Panc1 (cell line): ENCODE measurements at regions of chr10 and their contacts with region 1.

Region 1: DNA sequence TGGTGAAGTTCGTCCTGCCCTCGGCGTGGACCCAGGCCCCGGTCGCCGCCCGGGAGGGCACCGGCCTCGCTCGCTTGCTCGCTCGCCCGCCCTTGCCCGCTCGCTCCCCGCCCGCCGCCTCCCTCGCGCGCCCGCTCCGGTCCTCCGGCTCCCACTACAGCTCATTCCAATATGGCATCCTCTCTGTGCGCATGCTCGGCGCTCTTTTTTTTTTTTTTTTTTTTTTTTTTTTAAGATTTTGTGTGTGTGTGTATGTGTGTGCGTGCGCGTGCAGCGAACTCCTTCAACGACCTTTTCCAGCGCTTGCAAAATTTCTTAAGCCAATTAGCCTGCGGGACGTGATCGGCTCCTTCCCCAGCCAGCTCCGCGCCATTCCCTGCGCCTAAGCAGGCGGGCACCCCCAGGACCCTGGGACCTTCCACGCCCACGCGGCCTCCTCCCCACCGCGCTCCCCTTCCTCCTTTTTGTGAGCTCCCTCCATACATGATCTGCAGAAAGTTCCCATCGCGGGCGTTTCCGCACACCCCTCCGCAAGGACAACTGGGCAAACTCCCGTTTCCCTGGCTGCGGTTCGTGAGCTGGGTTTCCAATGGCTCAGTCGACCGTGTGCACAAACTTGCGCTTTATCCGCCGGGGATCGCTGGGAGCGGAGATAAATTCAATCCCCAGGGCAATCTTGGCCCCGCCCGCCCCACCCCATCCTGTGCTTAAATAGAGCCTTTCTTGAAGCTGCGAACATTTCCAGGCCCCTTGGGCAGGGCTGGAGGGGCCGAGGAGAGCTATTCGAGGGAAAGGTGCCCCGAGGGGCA is at the start of gene SFMBT2:
- DNase-seq: no peak
- ATAC-seq: peak; percentile 70
- H3K4me3 ChIP-seq: peak within 1 kb of the TSS; percentile 49 to 56
- H3K27ac ChIP-seq: peak within 1 kb of the TSS; percentile 23; the same call in 1 of the 2 replicates
- H3K4me1 ChIP-seq: no peaks in the 10 kb centered on the region
- H3K27me3 ChIP-seq: no peaks in the 10 kb centered on the region; the same call in 1 of the 2 replicates
- CTCF ChIP-seq: no peak
- total RNA-seq, gene SFMBT2: 1.3 TPM

Region 2: DNA sequence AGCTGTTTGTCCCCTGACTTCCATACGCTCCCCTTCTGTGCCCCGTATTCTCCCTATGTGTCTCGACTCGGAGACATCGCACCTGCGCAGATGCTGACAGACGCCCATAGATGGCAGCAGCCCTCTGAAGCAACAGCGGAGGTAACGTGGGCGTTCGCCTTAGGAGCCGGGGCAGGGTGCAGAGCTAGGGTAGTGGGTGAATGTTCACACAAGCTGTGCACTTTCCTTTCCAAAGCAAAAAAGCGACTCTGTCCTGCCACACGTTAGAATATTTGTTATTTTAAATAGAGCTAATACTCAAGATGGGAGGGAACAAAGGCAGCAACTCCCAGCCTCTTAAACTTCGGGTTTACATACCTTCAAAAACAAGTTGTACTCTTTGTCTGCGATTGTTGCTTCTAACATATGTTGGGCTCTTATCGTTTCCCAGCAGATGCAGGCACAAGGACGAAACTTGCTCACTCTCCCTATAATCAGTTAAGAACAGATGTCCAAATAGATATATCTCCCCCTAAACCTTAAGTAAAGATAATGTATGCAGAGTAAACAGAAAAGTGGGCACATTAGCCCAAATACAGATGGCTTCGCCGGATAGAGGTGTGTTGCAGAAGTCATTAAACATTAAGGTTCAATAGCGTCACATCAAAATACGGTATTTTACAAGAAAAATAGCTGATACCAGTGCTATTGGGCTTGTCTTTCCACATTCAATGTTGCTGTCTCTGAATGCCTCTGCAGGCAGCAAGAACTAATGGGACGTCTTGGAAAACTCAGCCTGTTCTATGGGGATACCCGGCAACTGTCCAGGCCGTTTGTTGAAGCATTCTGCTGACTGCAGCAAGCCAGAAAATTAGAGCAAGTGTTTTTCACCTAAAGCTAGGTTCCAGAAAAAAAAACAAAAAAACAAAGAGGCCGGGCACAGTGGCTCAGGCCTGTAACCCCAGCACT is 490.7 kb before region 1 on chr10:
- CTCF ChIA-PET with region 1: interaction called, 10 read pairs
- POLR2A ChIA-PET with region 1: no interaction called
- in situ Hi-C with region 1: no loop called
- intact Hi-C with region 1: loop called (anchors 10 kb)
- DNase-seq: peak; percentile 36
- ATAC-seq: peak; percentile 90
- H3K4me3 ChIP-seq: peak overlapping the region in 1 of 2 experiments; percentile 30; a peak in 1 of 4 replicates
- H3K27ac ChIP-seq: no peak overlapping the region
- H3K4me1 ChIP-seq: no peaks in the 10 kb centered on the region
- H3K27me3 ChIP-seq: no peaks in the 10 kb centered on the region
- CTCF ChIP-seq: peak; percentile 80

Region 3: DNA sequence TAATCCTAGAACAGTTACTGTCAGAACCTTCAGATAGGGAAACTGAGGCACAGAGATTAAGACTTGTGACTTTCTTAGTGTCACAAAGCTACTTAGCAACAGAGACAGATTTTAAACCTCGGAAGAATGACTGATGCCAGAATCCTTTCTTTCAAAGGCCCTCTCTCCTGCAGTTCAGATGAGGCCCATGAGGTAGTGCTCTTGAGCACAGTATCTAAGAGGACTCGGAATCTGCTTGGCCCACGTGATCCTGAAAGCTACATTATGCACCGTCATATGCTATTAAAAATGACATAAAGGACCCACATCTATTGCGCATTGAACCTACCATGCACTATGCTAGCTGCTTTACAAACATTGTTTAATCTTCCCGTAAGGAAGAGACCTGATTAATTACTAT is 356.2 kb before region 1 on chr10:
- CTCF ChIA-PET with region 1: interaction called, 10 read pairs
- POLR2A ChIA-PET with region 1: no interaction called
- in situ Hi-C with region 1: no loop called
- intact Hi-C with region 1: no loop called
- DNase-seq: no peak
- ATAC-seq: no peak
- H3K4me3 ChIP-seq: no peak overlapping the region
- H3K27ac ChIP-seq: no peak overlapping the region
- H3K4me1 ChIP-seq: no peaks in the 10 kb centered on the region
- H3K27me3 ChIP-seq: no peaks in the 10 kb centered on the region
- CTCF ChIP-seq: peak; percentile 11; the same call in 1 of the 2 replicates

Region 4: DNA sequence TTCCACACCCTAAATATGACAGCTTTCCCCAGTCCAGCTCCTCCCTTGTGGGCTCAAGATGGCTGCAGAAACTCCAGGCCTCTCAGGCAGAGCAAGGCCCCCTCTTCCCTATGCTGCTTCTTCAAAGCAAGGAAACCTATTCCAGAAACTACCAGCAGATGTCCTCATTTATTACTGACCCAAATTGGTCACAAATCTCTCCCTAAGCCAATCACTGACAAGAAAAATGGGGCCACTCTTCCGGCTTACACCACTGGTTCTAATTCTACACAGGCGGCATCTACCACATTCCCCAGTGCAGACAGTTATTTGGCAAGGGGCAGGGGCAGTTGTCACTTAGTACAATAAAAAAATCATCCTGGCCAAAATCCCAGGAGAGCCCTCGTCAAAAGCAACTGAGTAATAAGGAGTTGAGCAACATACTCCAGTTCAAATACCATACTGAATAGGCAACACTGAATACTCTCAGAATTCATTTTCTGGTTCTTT is 150.6 kb before region 1 on chr10:
- CTCF ChIA-PET with region 1: no interaction called
- POLR2A ChIA-PET with region 1: no interaction called
- in situ Hi-C with region 1: no loop called
- intact Hi-C with region 1: loop called (anchors 5 kb)
- DNase-seq: no peak
- ATAC-seq: peak; percentile 48; the same call in 1 of the 2 replicates
- H3K4me3 ChIP-seq: no peak overlapping the region
- H3K27ac ChIP-seq: no peak overlapping the region
- H3K4me1 ChIP-seq: no peaks in the 10 kb centered on the region
- H3K27me3 ChIP-seq: no peaks in the 10 kb centered on the region; the same call in 1 of the 2 replicates
- CTCF ChIP-seq: peak; percentile 61